ENCODE measurements at regions of chr14 and their contacts with region 1.

Region 1: DNA sequence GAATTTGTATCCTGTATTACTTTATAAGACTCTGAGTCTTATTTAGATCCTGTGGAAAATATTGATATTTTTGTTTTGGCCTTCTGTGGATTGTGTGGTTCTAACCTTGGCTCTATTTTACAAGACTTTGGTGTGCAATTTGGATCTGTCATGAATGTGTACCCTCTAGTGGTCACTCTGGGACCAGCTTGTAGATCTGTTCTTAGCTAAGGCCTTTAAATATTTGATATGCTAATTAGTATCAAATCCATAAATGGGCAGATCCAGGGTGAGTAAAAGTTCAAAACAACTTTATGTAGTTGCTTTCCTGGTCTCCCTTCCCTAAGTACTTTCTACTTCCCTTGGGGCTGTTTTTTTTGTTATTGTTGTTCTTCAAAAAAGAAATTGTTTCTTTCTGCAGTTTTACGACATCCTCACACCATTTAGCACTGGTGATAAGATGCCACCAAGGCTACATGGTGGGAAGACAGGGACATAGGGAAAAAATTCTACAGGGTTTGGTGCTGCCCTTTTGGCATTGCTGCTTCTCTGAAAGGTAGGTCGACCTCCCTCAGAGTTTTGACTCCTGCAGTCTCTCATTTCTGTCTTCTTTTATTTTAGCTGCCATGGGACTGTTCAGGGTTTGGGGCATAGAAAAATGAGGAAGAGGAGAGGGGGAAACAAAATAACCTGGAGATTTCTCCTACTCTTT is 238.5 kb downstream of the GPHN start:
- DNase-seq: no peak
- H3K4me3 Mint-ChIP-seq: no peak overlapping the region
- H3K27ac Mint-ChIP-seq: no peak overlapping the region
- H3K4me1 Mint-ChIP-seq: peaks cover under 1% of the 10 kb centered on the region
- H3K27me3 Mint-ChIP-seq: peaks cover 6% of the 10 kb centered on the region

Region 2: GRCh38 chr14:66610154-66610563 is 136.3 kb before region 1 on chr14:
- intact Hi-C with region 1: loop called (anchors 10 kb)
- DNase-seq: no peak
- H3K4me3 Mint-ChIP-seq: no peak overlapping the region
- H3K27ac Mint-ChIP-seq: no peak overlapping the region
- H3K4me1 Mint-ChIP-seq: peaks cover 16% of the 10 kb centered on the region
- H3K27me3 Mint-ChIP-seq: peaks cover 12% of the 10 kb centered on the region

Measured in activated T-helper 2 cell treated with anti-CD3 and anti-CD28 coated beads, Interferon-gamma antibody, Interleukin-2, Interleukin-4, amounts not matched to agents 10 μg/mL and 5 μg/mL and 100 μg/mL, durations not matched to agents 14 hours and 24 hours and 36 hours (primary cell).